Transverse colon (tissue), 4 donors: ENCODE measurements at regions of chr7 and their contacts with region 1.

Region 1: DNA sequence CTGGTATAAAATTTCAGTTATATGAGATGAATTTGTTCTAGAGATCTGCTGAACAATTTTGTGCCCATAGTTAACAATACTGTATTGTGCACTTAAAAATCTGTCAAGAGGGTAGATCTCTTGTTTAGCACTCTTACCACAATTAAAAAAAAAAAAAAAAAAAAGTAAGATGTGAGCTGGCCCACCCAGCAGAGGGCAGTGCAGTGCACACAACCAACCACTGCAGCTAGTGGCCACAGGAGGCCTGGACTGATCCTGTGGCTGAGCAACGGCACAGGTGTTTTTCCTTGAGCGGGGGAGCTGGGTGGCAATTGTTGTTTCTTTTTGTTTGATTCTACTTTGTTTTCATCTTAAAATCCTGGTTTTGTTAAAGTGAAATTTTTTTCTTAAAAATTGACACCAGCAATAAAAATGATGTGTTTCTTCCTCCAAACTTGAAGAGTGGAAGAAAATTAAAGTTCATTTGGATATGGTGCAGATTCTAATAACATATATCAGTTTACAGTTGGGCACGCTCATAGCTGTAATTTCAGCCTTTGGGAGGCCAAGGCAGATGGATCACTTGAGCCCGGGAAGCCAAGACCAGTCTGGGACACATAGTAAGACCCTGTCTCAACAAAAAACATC is 171.1 kb upstream of the TBX20 start:
- DNase-seq: peak; percentile 46
- H3K4me3 ChIP-seq: no peak overlapping the region
- H3K27ac ChIP-seq: no peak overlapping the region
- H3K4me1 ChIP-seq: no peaks in the 10 kb centered on the region
- H3K27me3 ChIP-seq: no peaks in the 10 kb centered on the region
- CTCF ChIP-seq: peak; percentile 63 to 76 (median 69)
- EP300 ChIP-seq: no peak
- POLR2A ChIP-seq: no peak

Region 2: DNA sequence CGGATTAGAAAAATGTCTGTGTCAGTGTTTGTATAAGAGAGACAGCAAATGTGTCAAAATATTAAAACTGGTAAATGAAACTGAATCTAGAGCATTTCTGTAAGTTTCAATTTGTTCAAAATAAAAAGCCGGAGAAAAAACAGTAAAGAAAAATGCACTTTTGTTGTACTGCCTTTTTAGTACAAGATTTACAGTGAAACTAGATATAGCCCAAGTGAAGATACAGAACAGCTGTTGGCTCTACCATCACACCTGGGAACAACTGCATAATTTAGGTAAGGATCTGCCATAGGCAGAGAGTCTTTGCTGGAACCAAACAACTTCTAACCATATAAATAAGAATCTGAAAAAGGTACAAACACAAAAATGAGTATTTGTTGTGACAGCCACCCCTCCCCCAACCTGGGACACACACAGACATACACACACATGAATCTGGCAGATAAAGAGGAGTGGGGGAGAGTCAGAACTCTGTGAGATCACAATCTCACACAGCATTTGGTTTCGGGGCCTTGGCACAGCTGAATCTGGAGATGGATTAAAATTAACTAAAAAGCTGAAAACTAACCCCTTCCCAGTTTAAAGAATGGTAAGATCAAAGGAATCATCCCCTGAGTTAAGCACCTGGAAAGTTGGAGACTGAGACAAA is 442.5 kb before region 1 on chr7:
- in situ Hi-C with region 1: no loop called
- intact Hi-C with region 1: no loop called
- DNase-seq: no peak
- H3K4me3 ChIP-seq: no peak overlapping the region
- H3K27ac ChIP-seq: no peak overlapping the region
- H3K4me1 ChIP-seq: no peaks in the 10 kb centered on the region
- H3K27me3 ChIP-seq: no peaks in the 10 kb centered on the region
- CTCF ChIP-seq: no peak
- EP300 ChIP-seq: no peak
- POLR2A ChIP-seq: no peak

Region 3: DNA sequence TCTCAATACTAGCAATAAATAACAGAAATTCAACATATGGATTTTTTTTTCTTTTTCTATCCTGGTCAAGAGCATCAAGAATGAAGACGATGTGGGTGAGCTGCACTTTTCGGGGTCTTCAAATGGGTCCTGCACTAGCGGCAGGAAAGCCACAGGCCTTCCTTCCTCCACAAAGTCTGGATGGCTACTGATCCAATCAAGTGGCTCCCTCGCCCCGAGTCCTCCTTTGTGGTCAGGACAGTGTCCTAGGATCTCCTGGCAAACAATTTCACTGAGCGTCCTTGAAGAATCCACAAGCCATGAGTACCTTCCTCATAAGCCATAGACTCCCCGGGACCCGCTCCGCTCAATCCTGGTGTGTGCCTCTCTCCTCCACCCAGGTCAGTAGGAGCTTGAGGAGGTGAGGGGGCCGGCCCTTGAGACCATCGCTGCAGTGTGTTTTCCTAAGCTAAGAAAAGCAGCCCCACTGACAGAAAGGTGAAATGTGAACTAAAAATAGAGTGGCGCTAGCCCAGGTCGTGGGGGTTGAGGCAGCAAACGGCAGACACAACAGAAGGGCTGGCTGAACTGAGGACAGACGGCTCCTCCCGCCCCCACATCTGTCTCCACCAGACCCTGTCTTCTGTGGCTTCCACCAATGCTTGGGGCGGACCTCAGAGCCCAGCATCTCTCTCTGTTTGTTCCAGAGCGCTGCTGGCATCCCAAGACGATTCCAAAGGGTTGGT is 67.6 kb after region 1 on chr7:
- in situ Hi-C with region 1: no loop called
- intact Hi-C with region 1: no loop called
- DNase-seq: no peak
- H3K4me3 ChIP-seq: no peak overlapping the region
- H3K27ac ChIP-seq: no peak overlapping the region
- H3K4me1 ChIP-seq: no peaks in the 10 kb centered on the region
- H3K27me3 ChIP-seq: no peaks in the 10 kb centered on the region
- CTCF ChIP-seq: no peak
- EP300 ChIP-seq: no peak
- POLR2A ChIP-seq: no peak

Region 4: GRCh38 chr7:35624299-35625186 is 199.6 kb after region 1 on chr7:
- in situ Hi-C with region 1: loop called in 1 of 4 experiments (anchors 10 kb)
- intact Hi-C with region 1: no loop called
- DNase-seq: no peak
- H3K4me3 ChIP-seq: no peak overlapping the region
- H3K27ac ChIP-seq: no peak overlapping the region
- H3K4me1 ChIP-seq: peaks cover 0 to 3% (median 2%) of the 10 kb centered on the region in 4 donors
- H3K27me3 ChIP-seq: no peaks in the 10 kb centered on the region
- CTCF ChIP-seq: peak; percentile 69 to 79 (median 76)
- EP300 ChIP-seq: no peak
- POLR2A ChIP-seq: no peak

Region 5: GRCh38 chr7:36001546-36001945 is 576.6 kb after region 1 on chr7:
- in situ Hi-C with region 1: no loop called
- intact Hi-C with region 1: no loop called
- DNase-seq: no peak
- H3K4me3 ChIP-seq: no peak overlapping the region
- H3K27ac ChIP-seq: no peak overlapping the region
- H3K4me1 ChIP-seq: no peaks in the 10 kb centered on the region
- H3K27me3 ChIP-seq: no peaks in the 10 kb centered on the region
- CTCF ChIP-seq: no peak
- EP300 ChIP-seq: no peak
- POLR2A ChIP-seq: no peak